ENCODE measurements at regions of chr21 and their contacts with region 1.

Region 1: DNA sequence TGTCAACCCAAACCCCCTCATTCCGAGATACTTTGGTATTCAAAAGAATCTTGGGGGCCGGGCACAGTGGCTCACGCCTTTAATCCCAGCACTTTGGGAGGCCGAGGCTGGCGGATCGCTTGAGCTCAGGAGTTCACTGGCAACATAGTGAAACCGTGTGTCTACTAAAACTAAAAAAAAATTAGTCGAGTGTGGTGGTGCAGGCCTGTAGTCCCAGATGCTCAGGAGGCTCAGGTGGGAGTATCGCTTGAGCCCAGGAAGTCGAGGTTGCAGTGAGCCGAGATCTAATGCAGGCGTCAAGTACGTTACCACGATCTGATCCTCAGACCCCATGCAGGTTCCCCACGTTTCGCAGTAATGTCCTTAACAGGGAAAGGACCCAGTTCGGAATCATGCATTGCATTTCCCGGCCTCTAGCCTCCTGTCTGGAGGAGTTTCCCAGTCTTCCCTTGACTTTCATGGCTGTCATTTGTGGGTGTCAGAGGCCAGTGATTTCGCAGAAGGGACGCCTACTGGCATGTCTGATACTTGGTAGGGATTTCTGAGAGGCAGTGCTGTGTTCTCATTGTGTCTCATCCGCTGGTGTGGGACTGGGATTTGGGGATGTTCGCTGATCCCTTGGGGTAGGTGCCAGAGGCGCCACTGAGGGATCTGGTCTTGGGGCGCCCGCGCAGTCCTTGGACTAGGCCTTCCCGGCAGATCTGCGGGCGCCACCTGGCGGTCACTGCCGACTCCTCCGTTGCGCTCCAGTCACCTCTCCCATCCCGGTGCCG is 39.3 kb upstream of the HMGN1 start:
- DNase-seq: peak; percentile 80
- H3K4me3 Mint-ChIP-seq: peak overlapping the region; percentile 86
- H3K27ac Mint-ChIP-seq: peak overlapping the region; percentile 87
- H3K4me1 Mint-ChIP-seq: peaks cover 19% of the 10 kb centered on the region
- H3K27me3 Mint-ChIP-seq: no peaks in the 10 kb centered on the region

Region 2: DNA sequence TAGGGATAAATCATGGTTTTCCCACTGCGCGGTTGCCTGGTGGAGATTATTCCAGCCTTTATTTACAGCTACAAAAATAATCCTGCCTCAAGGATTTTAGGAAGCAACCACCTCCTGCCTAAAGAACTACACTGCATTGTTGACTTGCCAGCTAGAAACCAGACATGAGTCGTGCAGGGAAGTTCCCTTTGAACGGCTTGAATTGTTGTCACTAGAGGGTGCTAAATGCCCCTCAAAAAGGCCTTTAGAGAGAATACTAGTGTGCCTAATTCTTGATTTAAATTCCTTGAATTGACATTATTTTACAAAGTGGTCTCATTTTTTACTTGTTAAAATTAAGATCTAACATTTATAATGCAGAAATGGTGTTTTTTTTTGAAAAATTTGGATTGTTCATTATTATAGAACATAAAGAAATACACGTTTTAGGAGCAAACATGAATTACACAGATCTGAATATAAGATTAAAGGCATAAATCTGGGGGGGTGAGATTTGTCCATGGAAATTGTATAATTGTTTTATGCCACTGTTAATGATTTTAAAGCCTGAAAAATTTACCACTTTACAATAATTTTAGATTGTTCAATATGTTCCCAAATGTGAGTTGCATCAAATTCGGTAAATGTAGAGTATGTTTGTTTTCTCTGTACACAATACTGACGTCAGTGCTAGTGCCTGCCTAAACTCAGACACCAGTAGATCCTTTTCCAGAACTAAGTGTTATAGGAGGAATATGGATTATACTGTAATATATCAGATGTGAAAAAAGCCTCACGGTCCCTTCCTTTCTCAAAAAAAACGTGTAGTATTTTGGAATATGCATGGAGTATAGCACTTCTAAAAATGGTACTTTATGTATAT is 882.3 kb before region 1 on chr21:
- intact Hi-C with region 1: loop called (anchors 1 kb)
- DNase-seq: no peak
- H3K4me3 Mint-ChIP-seq: no peak overlapping the region
- H3K27ac Mint-ChIP-seq: peak overlapping the region; percentile 11
- H3K4me1 Mint-ChIP-seq: peaks cover 15% of the 10 kb centered on the region
- H3K27me3 Mint-ChIP-seq: peaks cover 10% of the 10 kb centered on the region

Region 3: DNA sequence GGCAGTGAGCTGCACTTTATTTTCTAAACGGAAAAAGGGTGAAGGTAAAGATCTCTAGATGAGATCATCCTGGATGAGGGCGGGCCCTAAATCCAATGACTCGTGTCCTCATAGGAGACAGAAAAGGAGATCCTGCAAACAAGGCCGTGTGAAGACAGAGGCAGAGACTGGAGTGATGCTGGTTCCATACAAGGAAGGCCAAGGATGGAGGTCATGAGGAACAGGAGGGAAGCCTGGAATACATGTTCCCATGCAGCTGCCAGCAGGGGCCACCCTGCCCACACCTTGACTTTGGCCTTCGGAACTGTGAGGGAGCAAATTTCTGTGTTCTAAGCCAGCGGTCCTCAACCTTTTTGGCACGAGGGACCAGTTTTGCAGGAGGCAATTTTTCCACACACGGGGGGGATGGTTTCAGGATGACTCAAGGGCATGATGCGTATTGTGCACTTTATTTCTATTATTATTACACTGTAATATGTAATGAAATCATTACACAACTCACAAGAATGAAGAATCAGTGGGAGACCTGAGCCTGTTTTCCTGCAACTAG is 299.3 kb before region 1 on chr21:
- intact Hi-C with region 1: no loop called
- DNase-seq: no peak
- H3K4me3 Mint-ChIP-seq: no peak overlapping the region
- H3K27ac Mint-ChIP-seq: no peak overlapping the region
- H3K4me1 Mint-ChIP-seq: no peaks in the 10 kb centered on the region
- H3K27me3 Mint-ChIP-seq: peaks cover 1% of the 10 kb centered on the region

Region 4: GRCh38 chr21:39313571-39314142 is 74.6 kb before region 1 on chr21 and contains the start of gene BRWD1:
- intact Hi-C with region 1: loop called (anchors 1 kb)
- DNase-seq: peak; percentile 75
- H3K4me3 Mint-ChIP-seq: peak within 1 kb of the TSS; percentile 92
- H3K27ac Mint-ChIP-seq: peak within 1 kb of the TSS; percentile 97
- H3K4me1 Mint-ChIP-seq: peaks cover 31% of the 10 kb centered on the region
- H3K27me3 Mint-ChIP-seq: no peaks in the 10 kb centered on the region
- total RNA-seq, gene BRWD1: 34.7 and 38.1 TPM in 2 replicates

Measured in activated T-helper 1 cell treated with anti-CD3 and anti-CD28 coated beads, Interleukin-12 subunit alpha, Interleukin-12 subunit beta, Interleukin-2, Interleukin-4 antibody, amounts not matched to agents 30 ng/mL and 10 ng/mL and 1 ng/mL, durations not matched to agents 14 hours and 24 hours and 36 hours (primary cell).